PC-9 (cell line): ENCODE measurements at regions of chr21 and their contacts with region 1.

Region 1: GRCh38 chr21:28220680-28221079 is 772.0 kb downstream of the LTN1 start:
- DNase-seq: no peak
- H3K4me3 ChIP-seq: no peak overlapping the region
- H3K27ac ChIP-seq: no peak overlapping the region
- H3K4me1 ChIP-seq: no peaks in the 10 kb centered on the region
- H3K27me3 ChIP-seq: no peaks in the 10 kb centered on the region
- CTCF ChIP-seq: no peak

Region 2: GRCh38 chr21:28207436-28208173 is 13.1 kb before region 1 on chr21:
- CTCF ChIA-PET with region 1: no interaction called
- POLR2A ChIA-PET with region 1: no interaction called
- intact Hi-C with region 1: loop called (anchors 1 kb)
- DNase-seq: no peak
- H3K4me3 ChIP-seq: no peak overlapping the region
- H3K27ac ChIP-seq: no peak overlapping the region
- H3K4me1 ChIP-seq: no peaks in the 10 kb centered on the region
- H3K27me3 ChIP-seq: no peaks in the 10 kb centered on the region
- CTCF ChIP-seq: no peak